ENCODE measurements at regions of chr19 and their contacts with region 1.

Region 1: DNA sequence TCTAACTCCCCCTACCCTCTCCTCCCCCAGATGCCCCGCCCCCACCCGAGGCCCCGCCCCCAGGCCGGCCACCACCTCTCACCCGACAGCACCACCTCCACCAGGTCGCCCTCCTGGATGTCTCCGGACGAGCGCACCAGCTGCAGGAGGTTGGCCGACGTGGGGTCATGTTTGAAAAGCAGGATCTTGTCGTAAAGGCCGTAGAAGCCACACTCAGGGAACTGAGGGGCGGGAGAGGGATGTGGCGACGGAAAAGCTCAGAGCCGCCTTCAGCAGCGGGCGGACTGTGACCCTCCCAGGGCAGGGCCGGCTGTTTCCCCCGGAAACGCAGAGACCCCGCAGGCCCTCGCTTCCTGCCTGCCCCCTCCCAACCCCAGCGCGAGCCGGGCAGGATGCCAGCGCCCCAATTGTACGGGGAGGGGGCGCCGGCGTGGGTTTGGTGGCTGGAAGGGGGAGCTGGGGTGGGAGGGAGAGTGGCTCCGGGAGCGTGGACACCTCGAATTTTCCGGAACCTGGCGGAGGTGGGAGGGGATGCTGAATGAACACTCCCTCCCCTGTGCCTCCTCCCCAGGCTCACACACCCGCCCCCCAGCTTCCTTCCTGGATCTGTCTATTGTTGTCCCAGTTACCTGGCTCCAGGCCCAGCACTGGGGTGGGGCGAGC is 3.0 kb downstream of the PRKD2 start:
- DNase-seq: peak; percentile 68 to 70
- ATAC-seq: peak; percentile 34 to 50
- H3K4me3 ChIP-seq: peak overlapping the region; percentile 63 to 88 (median 80)
- H3K27ac ChIP-seq: peak overlapping the region; percentile 74 to 88 (median 80)
- H3K4me1 ChIP-seq: peaks cover 18 to 31% of the 10 kb centered on the region in 2 donors
- H3K27me3 ChIP-seq: no peaks in the 10 kb centered on the region
- CTCF ChIP-seq: no peak
- POLR2A ChIP-seq: no peak

Region 2: GRCh38 chr19:46640656-46641055 is 73.3 kb before region 1 on chr19:
- in situ Hi-C with region 1: no loop called
- intact Hi-C with region 1: loop called (anchors 1 kb)
- DNase-seq: no peak
- ATAC-seq: no peak
- H3K4me3 ChIP-seq: no peak overlapping the region
- H3K27ac ChIP-seq: no peak overlapping the region
- H3K4me1 ChIP-seq: peaks cover 11 to 14% of the 10 kb centered on the region in 2 donors
- H3K27me3 ChIP-seq: peaks cover 26 to 38% (median 28%) of the 10 kb centered on the region in 3 donors
- CTCF ChIP-seq: no peak
- POLR2A ChIP-seq: no peak

Region 3: DNA sequence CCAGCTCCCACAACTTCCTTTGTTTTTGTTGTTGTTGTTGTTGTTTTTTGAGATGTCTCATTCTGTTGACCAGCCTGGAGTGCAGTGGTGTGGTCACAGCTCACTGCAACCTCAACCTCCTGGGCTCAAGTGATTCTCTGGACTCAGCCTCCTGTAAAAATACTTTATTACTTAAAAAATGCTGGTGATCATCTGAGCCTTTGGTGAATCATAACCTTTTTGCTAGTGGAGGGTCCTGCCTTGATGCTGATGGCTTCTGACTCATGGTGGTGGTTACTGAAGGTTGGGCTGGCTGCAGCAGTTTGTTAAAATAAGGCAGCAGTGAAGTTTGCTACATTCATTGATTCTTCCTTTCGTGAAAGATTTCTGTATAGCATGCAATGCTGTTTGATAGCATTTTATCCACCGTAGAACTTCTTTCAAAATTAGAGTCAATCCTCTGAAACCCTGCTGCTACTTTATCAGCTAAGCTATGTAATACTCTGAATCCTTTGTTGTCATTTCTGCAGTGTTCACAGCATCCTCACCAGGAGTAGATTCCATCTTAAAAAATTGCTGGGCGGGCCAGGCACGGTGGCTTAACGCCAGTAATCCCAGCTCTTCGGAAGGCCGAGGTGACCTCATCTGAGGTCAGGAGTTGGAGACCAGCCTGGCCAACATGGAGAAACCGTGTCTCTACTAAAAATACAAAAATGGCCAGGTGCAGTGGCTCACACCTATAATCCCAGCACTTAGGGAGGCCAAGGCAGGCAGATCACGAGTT is 164.9 kb after region 1 on chr19:
- in situ Hi-C with region 1: no loop called
- intact Hi-C with region 1: no loop called
- DNase-seq: no peak
- ATAC-seq: no peak
- H3K4me3 ChIP-seq: no peak overlapping the region
- H3K27ac ChIP-seq: no peak overlapping the region
- H3K4me1 ChIP-seq: peaks cover 6 to 19% of the 10 kb centered on the region in 2 donors
- H3K27me3 ChIP-seq: no peaks in the 10 kb centered on the region
- CTCF ChIP-seq: no peak
- POLR2A ChIP-seq: no peak

Region 4: GRCh38 chr19:47075179-47075810 is 361.4 kb after region 1 on chr19:
- in situ Hi-C with region 1: no loop called
- intact Hi-C with region 1: no loop called
- DNase-seq: no peak
- ATAC-seq: no peak
- H3K4me3 ChIP-seq: no peak overlapping the region
- H3K27ac ChIP-seq: no peak overlapping the region
- H3K4me1 ChIP-seq: no peaks in the 10 kb centered on the region
- H3K27me3 ChIP-seq: no peaks in the 10 kb centered on the region
- CTCF ChIP-seq: no peak
- POLR2A ChIP-seq: no peak